ENCODE measurements at regions of chr4 and their contacts with region 1.

Region 1: DNA sequence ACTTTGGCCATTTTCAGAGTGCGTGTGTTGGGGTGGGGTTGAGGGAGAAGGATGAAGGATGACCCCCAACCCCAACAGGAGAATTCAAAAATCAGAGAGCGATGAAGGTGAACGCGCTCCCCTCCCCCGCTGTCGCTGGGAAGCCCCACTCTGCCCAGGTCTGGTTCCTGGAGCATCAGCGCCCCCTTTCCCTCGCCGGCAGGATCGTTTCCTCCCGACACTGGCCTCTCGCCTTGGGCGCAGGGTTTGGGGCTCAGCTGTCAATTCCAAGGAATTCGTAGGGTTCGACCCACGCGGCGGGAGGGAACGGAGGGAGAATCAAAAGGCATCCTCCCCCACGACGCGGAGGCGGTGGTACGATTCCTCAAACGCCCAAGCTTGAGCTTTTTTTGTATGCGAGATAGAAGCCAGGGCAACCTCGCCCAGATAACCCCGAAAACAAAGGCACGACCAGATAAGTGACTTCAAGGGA is 1.0 kb upstream of the PDGFRA start:
- DNase-seq: peak; percentile 80
- ATAC-seq: peak; percentile 60 to 67

Region 2: GRCh38 chr4:53015681-53016080 is 1212.4 kb before region 1 on chr4:
- intact Hi-C with region 1: loop called (anchors 5 to 10 kb)
- DNase-seq: no peak
- ATAC-seq: peak in 1 of 2 donors; percentile 35

Region 3: GRCh38 chr4:53489279-53489889 is 738.7 kb before region 1 on chr4:
- intact Hi-C with region 1: loop called in 1 of 2 experiments (anchors 10 kb)
- DNase-seq: no peak
- ATAC-seq: no peak

Region 4: DNA sequence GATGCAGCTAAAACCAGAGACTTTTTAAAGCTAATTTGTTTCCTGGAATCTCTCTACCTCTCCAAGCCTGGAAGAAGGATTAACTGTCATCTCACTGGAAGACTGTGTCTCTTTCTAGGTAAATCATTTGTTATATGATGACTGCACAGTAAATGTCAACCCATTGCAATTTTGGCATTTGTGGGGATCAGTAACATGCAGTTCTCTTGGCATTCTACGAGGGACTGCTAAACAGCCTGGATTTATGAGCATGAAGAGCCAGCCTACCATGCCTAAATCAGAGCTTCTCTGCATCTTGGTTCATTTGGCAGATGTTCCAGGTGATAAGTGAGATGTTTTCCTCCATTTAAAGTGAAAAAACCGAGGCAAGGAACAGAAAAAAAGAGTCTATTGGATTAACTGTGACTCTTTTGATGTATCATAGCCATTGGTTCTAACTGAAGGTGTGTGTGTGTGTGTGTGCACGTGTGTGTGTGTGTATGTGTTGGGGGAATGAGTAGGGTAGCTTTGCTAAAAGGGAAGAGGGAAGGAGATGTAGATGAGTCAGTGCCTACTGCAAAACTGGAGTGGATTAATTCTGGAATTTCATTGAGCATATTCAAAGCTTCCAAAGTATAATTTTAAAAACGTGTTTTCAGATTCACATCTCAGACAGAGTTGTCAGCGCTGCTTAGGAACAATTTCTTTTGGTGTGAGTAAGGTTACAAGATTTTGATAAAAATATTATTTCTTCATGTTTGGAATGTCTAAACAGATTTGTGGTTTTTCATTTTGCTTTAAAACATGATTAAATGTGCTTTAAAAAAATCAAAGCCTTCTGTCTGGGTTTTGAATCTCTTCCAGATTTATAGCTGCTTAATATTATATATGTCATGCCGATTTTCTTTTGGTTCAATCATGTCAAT is 513.6 kb before region 1 on chr4:
- intact Hi-C with region 1: loop called (anchors 5 to 10 kb)
- DNase-seq: no peak
- ATAC-seq: peak in 1 of 2 donors; percentile 33

Region 5: DNA sequence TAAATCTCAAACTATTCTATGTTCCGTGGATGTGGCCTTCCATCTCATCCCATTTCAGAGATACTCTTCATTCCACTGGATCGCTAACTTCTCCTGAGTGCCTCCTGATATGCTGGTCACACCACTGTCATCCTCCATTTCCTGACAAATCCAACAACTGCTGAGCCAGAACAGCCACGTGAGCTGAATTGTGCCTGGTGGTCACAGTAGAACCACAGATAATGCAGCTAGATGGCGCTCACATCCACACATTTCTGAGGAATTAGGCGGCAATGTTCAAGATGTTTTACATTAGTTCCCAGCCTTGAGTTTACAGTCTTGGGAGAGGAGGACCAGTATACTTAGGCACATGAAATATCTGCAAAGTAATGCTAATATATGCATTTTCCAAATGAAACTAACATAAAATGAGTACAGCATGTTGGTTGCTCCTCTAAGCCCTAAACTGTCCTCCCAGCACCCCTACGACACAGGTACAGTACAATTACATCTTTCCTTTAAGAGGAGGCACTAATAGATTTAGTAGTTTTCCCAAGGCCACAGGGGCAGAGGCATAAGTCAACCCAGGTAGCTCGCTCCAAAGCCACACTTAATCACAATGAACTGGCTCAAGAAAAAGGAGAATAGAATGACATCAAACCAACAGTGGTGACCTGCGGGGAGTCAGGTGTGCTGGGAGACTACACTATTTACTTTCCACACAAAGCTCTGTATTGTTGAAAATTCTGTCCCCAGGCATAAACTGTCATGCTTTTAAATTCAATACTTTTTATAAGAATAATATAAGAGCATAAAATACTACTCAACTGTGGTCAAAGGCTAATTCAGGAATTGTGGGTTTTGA is 297.9 kb before region 1 on chr4:
- intact Hi-C with region 1: loop called in 1 of 2 experiments (anchors 5 kb)
- DNase-seq: peak; percentile 76
- ATAC-seq: peak; percentile 88 to 90

Region 6: GRCh38 chr4:54139332-54139731 is 88.8 kb before region 1 on chr4:
- intact Hi-C with region 1: no loop called
- DNase-seq: no peak
- ATAC-seq: no peak

Region 7: GRCh38 chr4:54315561-54316538 is 87.8 kb after region 1 on chr4:
- intact Hi-C with region 1: no loop called
- DNase-seq: no peak
- ATAC-seq: no peak